Panc1 (cell line): ENCODE measurements at regions of chr18 and their contacts with region 1.

Region 1: DNA sequence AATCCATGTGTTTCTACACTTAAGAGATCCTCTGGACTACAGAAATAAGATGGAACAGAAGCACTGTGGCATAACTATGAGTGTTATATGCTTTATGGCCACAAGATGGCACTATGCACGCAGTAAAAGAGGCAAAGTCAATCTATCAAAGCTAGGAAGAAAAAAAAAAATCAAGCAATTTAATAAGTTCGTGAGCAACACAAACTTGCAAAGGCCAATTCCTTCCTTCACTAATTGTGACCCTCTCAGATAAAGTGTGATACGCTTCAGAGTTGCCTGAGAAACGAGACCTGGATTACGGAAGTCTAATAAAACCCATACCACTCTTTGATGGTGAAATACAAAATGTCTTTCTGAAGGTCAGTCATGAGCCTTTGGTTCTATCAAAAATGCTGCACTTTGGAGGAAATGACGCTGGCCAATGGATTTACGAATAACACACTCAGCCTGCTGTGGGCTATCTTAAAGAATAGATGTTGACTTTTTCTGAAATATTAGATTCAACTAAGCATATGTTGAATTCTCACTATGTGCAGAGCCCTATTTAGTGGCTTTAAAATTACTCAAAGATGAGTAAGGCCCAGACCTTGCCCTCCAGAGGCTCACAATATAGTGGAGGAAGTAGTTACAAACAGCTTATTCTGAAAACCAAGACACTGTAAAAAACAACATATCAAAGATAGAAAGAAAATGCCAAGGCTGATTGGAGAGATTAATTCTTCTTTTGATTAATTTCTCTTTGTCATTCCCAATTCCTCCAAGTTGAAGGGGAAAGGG is 35.5 kb upstream of the TTR start:
- DNase-seq: peak; percentile 42
- ATAC-seq: peak; percentile 82; the same call in 1 of the 2 replicates
- H3K4me3 ChIP-seq: no peak overlapping the region
- H3K27ac ChIP-seq: no peak overlapping the region
- H3K4me1 ChIP-seq: no peaks in the 10 kb centered on the region; the same call in 1 of the 2 replicates
- H3K27me3 ChIP-seq: no peaks in the 10 kb centered on the region
- CTCF ChIP-seq: peak; percentile 64; the same call in 1 of the 2 replicates

Region 2: GRCh38 chr18:31603315-31603714 is 47.2 kb after region 1 on chr18:
- CTCF ChIA-PET with region 1: no interaction called
- POLR2A ChIA-PET with region 1: no interaction called
- in situ Hi-C with region 1: no loop called
- intact Hi-C with region 1: no loop called
- DNase-seq: no peak
- ATAC-seq: no peak
- H3K4me3 ChIP-seq: no peak overlapping the region
- H3K27ac ChIP-seq: no peak overlapping the region
- H3K4me1 ChIP-seq: no peaks in the 10 kb centered on the region
- H3K27me3 ChIP-seq: no peaks in the 10 kb centered on the region
- CTCF ChIP-seq: no peak

Region 3: DNA sequence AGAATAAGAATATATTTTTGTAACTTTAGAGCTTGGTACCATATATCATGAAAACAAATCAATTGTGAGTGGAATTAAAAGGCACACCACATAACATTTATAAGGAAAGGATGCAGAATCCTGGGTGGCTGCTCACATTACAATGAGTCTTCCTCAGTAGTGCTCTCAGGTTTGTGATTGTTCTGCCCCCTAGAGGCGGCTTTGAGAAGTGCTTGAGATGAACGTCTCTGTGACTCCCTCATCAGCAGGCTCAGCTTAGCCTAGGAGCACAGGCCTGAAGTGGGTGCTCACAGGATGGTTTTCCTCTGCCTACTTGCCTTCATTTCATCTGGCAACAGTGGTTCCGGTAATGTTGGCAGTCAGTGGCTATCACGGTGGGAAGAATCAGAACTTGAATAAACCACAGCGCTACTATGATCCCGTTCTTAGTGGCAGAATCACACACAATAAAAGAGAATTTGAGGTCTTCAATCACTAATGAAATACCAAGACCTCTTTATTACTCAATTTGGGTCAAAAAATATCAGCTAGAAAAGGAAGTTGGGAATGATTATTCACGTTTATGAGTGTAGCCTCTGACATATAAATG is 166.3 kb after region 1 on chr18:
- CTCF ChIA-PET with region 1: interaction called, 3 read pairs
- POLR2A ChIA-PET with region 1: no interaction called
- in situ Hi-C with region 1: no loop called
- intact Hi-C with region 1: loop called (anchors 1 kb)
- DNase-seq: peak; percentile 62
- ATAC-seq: peak; percentile 98
- H3K4me3 ChIP-seq: no peak overlapping the region
- H3K27ac ChIP-seq: no peak overlapping the region
- H3K4me1 ChIP-seq: no peaks in the 10 kb centered on the region; the same call in 1 of the 2 replicates
- H3K27me3 ChIP-seq: no peaks in the 10 kb centered on the region
- CTCF ChIP-seq: peak; percentile 83

Region 4: GRCh38 chr18:32126538-32126937 is 570.4 kb after region 1 on chr18:
- CTCF ChIA-PET with region 1: no interaction called
- POLR2A ChIA-PET with region 1: no interaction called
- in situ Hi-C with region 1: no loop called
- intact Hi-C with region 1: no loop called
- DNase-seq: no peak
- ATAC-seq: no peak
- H3K4me3 ChIP-seq: no peak overlapping the region
- H3K27ac ChIP-seq: no peak overlapping the region
- H3K4me1 ChIP-seq: no peaks in the 10 kb centered on the region
- H3K27me3 ChIP-seq: no peaks in the 10 kb centered on the region
- CTCF ChIP-seq: no peak